Posterior cingulate gyrus (tissue), 11 donors: ENCODE measurements at regions of chr16 and their contacts with region 1.

Region 1: DNA sequence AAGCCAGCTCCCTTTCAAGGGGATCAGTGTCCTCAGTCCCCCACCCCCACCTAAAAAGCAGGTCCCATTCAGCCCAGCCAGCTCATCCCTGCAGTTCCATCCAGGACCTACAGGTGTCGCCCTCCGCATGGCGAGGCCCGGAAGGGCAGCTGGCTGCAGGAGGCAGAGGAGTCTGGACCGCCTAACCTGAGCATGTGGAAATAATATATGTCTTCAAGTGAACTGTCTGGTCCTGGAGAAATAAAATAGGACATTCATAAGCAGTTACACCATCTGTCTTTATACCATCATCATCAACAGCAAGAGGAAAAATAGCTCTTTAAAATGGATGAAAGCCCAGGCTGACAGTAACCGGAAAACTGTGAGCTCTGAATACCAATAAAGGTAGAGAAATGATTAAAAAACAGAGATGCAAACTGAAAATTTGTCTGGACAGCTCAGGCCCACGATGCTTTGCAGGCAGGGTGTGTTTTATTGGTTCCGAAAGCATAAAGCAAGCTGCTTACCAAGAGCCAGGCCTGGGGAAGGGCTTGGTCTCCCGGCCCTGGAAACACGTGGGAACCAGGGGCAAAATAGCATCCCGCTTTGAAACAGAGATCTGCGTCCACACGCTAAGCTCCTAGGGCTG is 215.2 kb downstream of the ZFHX3 start:
- DNase-seq: peak; percentile 62 to 96 (median 86)

Region 2: GRCh38 chr16:72961121-72961763 is 128.5 kb after region 1 on chr16:
- intact Hi-C with region 1: loop called (anchors 5 kb)
- DNase-seq: peak in 1 of 10 donors; percentile 69

Region 3: GRCh38 chr16:73196670-73197069 is 363.9 kb after region 1 on chr16:
- intact Hi-C with region 1: loop called (anchors 5 kb)
- DNase-seq: peak in 6 of 10 donors; percentile 26 to 87 (median 56)